ENCODE measurements at regions of chr19 and their contacts with region 1.

Region 1: GRCh38 chr19:1672038-1672768 is 19.8 kb upstream of the TCF3 start:
- DNase-seq: no peak

Region 2: GRCh38 chr19:1549332-1549945 is 122.8 kb before region 1 on chr19:
- intact Hi-C with region 1: loop called in 1 of 2 experiments (anchors 5 kb)
- DNase-seq: no peak